ENCODE measurements at regions of chr4 and their contacts with region 1.

Region 1: DNA sequence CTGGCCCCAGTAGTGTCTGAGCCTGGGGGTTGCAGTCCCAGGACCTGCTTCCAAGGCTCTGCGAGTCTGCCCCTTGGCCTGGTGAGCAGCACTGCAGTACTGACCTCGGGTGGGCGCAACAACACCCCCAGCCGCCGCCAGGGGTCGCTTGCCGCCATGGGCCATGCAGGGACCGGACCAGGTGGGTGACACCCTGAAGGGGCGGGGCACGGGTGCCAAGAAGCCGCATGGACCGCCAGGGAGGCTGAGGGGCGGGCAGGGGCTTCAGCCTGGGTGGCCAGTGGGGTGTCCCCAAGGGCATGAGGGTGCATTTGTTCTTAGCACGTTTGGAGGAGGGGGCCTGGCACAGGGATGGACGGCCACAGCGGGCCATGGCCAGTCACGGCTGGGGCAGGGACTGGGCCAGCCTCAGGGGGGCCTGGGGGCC is 25.0 kb downstream of the TACC3 start:
- DNase-seq: peak; percentile 98
- ATAC-seq: peak; percentile 87
- H3K4me3 Mint-ChIP-seq: no peak overlapping the region
- H3K27ac Mint-ChIP-seq: no peak overlapping the region
- H3K4me1 Mint-ChIP-seq: no peaks in the 10 kb centered on the region
- H3K27me3 Mint-ChIP-seq: peaks cover 2% of the 10 kb centered on the region; the same call in 1 of the 2 replicates
- CTCF ChIP-seq: peak; percentile 88

Region 2: DNA sequence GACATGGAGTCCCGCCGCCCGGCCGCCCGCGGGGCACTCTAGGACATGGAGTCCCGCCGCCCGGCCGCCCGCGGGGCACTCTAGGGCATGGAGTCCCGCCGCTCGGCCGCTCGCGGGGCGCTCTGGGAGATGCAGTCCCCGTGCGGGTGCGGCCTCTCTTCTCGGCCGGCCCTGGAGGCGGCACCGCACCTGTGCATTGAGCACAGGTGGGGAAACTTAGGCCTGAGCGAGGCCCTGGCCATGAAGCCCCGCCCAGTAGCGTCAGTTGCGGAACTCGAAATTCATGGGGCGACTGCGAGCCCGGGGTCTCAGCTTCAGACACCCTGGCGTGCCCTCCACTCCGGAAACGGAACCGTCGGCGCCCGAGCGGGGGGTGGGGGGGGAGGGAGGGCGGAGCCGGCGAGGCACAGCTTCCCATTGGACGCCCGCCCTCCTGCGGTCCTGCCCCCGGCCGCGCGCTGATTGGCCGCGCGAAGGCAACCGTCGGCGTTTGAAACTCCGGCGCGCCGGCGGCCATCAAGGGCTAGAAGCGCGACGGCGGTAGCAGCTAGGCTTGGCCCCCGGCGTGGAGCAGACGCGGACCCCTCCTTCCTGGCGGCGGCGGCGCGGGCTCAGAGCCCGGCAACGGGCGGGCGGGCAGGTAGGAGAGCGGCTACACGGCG is 25.1 kb before region 1 on chr4 and contains the starts of genes TACC3 and TMEM129:
- CTCF ChIA-PET with region 1: interaction called, 13 read pairs
- POLR2A ChIA-PET with region 1: interaction called, 3 read pairs
- DNase-seq: peak; percentile 97
- ATAC-seq: peak; percentile 90
- H3K4me3 Mint-ChIP-seq: peak within 1 kb of the TSS; percentile 96
- H3K27ac Mint-ChIP-seq: peak within 1 kb of the TSS; percentile 96
- H3K4me1 Mint-ChIP-seq: peaks cover 23% of the 10 kb centered on the region
- H3K27me3 Mint-ChIP-seq: no peaks in the 10 kb centered on the region
- CTCF ChIP-seq: no peak
- total RNA-seq, gene TACC3: 161 to 207 TPM (median 165 TPM) in 3 replicates
- total RNA-seq, gene TMEM129: 44.2 to 54.9 TPM (median 48.7 TPM) in 3 replicates

Region 3: DNA sequence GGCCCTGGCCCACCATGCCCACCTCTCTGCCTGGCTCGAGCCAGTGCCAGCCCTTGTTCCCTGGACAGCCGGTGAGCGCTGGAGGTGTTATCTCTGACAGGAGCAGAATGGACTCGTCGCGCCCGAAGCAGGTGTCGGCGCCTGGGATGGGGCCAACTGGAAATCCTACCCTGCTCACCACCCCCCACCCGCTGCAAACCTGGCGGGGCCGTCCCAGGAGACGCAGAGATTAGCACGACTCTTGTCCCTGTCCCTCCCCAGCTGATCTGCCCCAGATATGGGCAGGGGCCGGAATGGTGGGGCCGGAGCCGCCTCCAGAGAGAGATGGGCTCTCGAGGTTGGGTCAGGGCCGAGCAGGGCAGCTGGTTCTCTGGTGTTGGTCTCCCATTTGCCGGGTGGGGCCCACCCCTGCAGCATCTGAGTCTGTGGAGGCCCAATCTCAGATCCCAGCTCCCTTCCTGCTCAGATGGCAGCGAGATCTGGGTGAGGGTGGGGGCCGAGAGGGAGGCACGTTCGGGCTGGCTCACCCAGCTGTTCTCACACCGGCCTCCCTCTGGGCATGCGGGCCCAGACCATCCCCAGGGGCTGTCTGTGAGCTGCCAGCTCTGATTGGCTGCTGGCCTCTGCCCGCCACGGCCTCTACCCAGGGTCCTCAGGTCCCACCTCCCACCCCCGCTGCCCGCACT is 26.7 kb after region 1 on chr4:
- CTCF ChIA-PET with region 1: interaction called, 62 read pairs
- POLR2A ChIA-PET with region 1: interaction called, 3 read pairs
- DNase-seq: no peak
- ATAC-seq: no peak
- H3K4me3 Mint-ChIP-seq: no peak overlapping the region
- H3K27ac Mint-ChIP-seq: no peak overlapping the region
- H3K4me1 Mint-ChIP-seq: peaks cover 14% of the 10 kb centered on the region
- H3K27me3 Mint-ChIP-seq: peaks cover 4% of the 10 kb centered on the region
- CTCF ChIP-seq: no peak

Region 4: GRCh38 chr4:1792832-1793495 is 46.7 kb after region 1 on chr4 and contains the start of gene FGFR3:
- CTCF ChIA-PET with region 1: interaction called, 115 read pairs
- POLR2A ChIA-PET with region 1: no interaction called
- DNase-seq: peak; percentile 78
- ATAC-seq: peak; percentile 71
- H3K4me3 Mint-ChIP-seq: peak within 1 kb of the TSS; percentile 54
- H3K27ac Mint-ChIP-seq: no peak within 1 kb of the TSS
- H3K4me1 Mint-ChIP-seq: no peaks in the 10 kb centered on the region
- H3K27me3 Mint-ChIP-seq: peaks cover 51% of the 10 kb centered on the region
- CTCF ChIP-seq: no peak
- total RNA-seq, gene FGFR3: 18.2 to 19.9 TPM (median 19.7 TPM) in 3 replicates

Region 5: GRCh38 chr4:1899149-1900086 is 153.1 kb after region 1 on chr4:
- CTCF ChIA-PET with region 1: interaction called, 10 read pairs
- POLR2A ChIA-PET with region 1: no interaction called
- DNase-seq: peak; percentile 79
- ATAC-seq: peak; percentile 97
- H3K4me3 Mint-ChIP-seq: no peak overlapping the region
- H3K27ac Mint-ChIP-seq: peak overlapping the region; percentile 71; the same call in 1 of the 2 replicates
- H3K4me1 Mint-ChIP-seq: peaks cover 6% of the 10 kb centered on the region
- H3K27me3 Mint-ChIP-seq: no peaks in the 10 kb centered on the region
- CTCF ChIP-seq: peak; percentile 94